ENCODE measurements at regions of chr9 and their contacts with region 1.

Region 1: DNA sequence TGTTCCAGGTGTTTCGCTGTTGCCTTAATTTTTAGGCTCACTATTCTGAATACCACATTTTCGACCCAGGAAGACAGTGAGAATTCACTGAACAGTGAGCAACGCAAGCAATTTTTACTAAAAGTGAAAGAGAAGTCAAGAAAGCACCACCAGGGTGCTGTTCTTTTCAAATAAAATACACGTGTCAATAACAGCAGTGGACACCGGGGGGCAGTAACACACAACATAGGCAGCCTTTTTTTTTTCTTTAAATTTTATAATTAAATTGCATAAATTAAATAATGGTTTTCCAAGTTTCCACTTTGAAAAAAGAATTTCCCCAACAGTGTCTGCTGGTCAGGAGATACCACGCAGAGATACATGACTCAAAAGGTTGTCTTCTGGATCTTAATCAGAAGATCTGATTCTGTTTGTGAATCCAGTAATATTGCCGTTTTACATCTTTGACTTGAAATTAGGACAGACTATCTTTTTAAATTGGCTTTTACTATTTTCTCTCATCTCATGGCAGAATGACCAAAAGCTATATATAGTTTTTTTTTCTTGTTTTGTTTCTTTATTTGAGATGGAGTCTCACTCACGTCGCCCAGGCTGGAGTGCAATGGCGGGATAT is 47.1 kb upstream of the SH3GL2 start:
- DNase-seq: peak in 1 of 2 experiments; percentile 24
- H3K4me3 ChIP-seq: no peak overlapping the region
- H3K27ac ChIP-seq: no peak overlapping the region
- H3K4me1 ChIP-seq: no peaks in the 10 kb centered on the region
- H3K27me3 ChIP-seq: peaks cover 8% of the 10 kb centered on the region; the same call in 1 of the 2 replicates
- CTCF ChIP-seq: peak; percentile 74

Region 2: GRCh38 chr9:17137566-17137965 is 394.2 kb before region 1 on chr9:
- CTCF ChIA-PET with region 1: no interaction called
- POLR2A ChIA-PET with region 1: no interaction called
- intact Hi-C with region 1: no loop called
- DNase-seq: no peak
- H3K4me3 ChIP-seq: no peak overlapping the region
- H3K27ac ChIP-seq: no peak overlapping the region
- H3K4me1 ChIP-seq: 0 out of 2 replicates have a peak, but pooled peaks cover 4% of the 10 kb centered on the region
- H3K27me3 ChIP-seq: no peaks in the 10 kb centered on the region
- CTCF ChIP-seq: no peak

Region 3: GRCh38 chr9:17695482-17695881 is 163.7 kb after region 1 on chr9:
- CTCF ChIA-PET with region 1: no interaction called
- POLR2A ChIA-PET with region 1: no interaction called
- intact Hi-C with region 1: no loop called
- DNase-seq: no peak
- H3K4me3 ChIP-seq: no peak overlapping the region
- H3K27ac ChIP-seq: no peak overlapping the region
- H3K4me1 ChIP-seq: no peaks in the 10 kb centered on the region
- H3K27me3 ChIP-seq: no peaks in the 10 kb centered on the region
- CTCF ChIP-seq: no peak

Region 4: GRCh38 chr9:17802249-17802857 is 270.6 kb after region 1 on chr9:
- CTCF ChIA-PET with region 1: no interaction called
- POLR2A ChIA-PET with region 1: no interaction called
- intact Hi-C with region 1: loop called (anchors 5 kb)
- DNase-seq: no peak
- H3K4me3 ChIP-seq: no peak overlapping the region
- H3K27ac ChIP-seq: no peak overlapping the region
- H3K4me1 ChIP-seq: no peaks in the 10 kb centered on the region
- H3K27me3 ChIP-seq: no peaks in the 10 kb centered on the region
- CTCF ChIP-seq: peak; percentile 64

Region 5: DNA sequence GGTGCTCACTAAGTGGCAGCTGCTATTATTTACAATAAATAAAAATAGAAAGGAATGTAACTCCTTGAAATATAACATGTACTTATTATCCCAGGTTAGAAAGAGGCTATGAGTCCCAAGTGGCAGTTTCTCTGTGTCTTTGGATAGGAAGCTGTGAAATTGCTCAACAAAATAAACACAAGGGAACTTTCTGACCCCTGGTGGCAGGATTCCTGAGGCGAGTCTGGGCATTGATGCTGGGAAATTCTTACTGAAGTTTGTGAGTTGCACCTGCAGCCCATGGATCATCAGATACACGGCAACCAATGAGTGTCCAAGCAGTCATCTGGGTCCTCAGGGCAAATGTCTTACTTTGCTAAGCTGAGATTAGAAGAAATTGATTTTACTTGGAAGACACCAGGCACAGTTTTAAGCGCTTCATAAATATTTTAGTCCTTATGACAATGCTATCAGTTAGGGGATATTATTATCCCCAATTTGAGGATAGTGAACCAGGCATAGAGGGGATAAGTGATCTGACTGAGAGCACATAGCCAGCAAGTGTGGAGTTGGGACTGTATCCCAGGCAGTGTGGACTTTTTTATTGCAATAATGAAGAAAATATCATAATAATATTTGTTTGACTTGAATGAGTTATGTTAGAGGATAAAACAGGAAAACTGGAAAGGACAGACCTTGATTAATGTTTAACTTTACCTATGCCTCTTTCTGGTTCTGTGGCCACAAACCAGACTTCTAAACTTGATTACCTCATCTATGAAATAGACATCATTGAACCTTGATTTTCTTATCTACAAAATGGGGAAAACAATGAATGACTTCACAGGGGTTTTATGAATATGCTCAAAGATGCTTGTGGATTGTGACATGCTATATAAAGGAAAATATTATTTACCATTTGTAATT is 676.7 kb after region 1 on chr9:
- CTCF ChIA-PET with region 1: no interaction called
- POLR2A ChIA-PET with region 1: no interaction called
- intact Hi-C with region 1: loop called (anchors 5 kb)
- DNase-seq: peak in 1 of 2 experiments; percentile 11
- H3K4me3 ChIP-seq: no peak overlapping the region
- H3K27ac ChIP-seq: no peak overlapping the region
- H3K4me1 ChIP-seq: no peaks in the 10 kb centered on the region
- H3K27me3 ChIP-seq: no peaks in the 10 kb centered on the region
- CTCF ChIP-seq: peak; percentile 54

Region 6: GRCh38 chr9:19028835-19029451 is 1497.2 kb after region 1 on chr9:
- CTCF ChIA-PET with region 1: interaction called, 3 read pairs
- POLR2A ChIA-PET with region 1: no interaction called
- intact Hi-C with region 1: loop called (anchors 5 kb)
- DNase-seq: peak; percentile 12 to 36
- H3K4me3 ChIP-seq: no peak overlapping the region
- H3K27ac ChIP-seq: no peak overlapping the region
- H3K4me1 ChIP-seq: no peaks in the 10 kb centered on the region
- H3K27me3 ChIP-seq: no peaks in the 10 kb centered on the region
- CTCF ChIP-seq: peak; percentile 76

Region 7: DNA sequence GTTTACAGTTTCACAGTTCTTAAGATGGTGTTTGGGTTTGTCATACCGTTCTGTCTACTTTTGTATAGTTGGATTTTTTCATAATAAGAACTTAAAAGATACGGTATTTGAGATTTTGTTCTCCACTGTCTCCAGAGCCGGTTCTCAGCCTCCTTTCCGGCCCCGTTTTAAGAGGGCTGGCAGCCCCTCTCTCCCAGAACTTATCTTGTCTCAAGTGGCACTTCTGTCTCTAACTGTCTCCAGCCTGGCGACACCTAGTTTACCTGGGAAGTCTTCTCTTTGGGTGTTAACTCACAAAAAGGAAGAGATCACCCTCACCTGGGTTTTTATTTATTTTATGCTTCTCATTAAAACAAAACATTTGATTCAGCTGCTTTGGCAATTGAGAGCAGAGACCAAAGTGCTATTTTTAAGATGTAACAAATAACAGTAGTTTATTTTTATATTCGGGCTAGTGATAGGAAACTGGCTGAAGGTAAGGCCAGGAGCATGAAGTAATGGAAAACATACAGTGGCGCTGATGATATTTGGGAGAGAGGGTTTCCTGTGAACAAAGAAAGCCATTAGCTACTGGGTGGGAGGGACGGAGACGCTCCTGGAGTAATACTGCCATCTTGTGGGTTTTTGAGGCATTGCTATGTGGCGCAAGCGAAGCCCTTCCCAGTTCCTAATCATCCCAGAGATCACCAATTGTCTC is 1925.4 kb after region 1 on chr9:
- CTCF ChIA-PET with region 1: no interaction called
- POLR2A ChIA-PET with region 1: no interaction called
- intact Hi-C with region 1: loop called (anchors 10 kb)
- DNase-seq: peak; percentile 45 to 59
- H3K4me3 ChIP-seq: no peak overlapping the region
- H3K27ac ChIP-seq: no peak overlapping the region
- H3K4me1 ChIP-seq: no peaks in the 10 kb centered on the region
- H3K27me3 ChIP-seq: no peaks in the 10 kb centered on the region
- CTCF ChIP-seq: peak; percentile 83

Measured in PC-9 (cell line).